Activated CD4-positive, alpha-beta memory T cell treated with anti-CD3 and anti-CD28 coated beads, Interleukin-2, amount 10 ng/mL, durations not matched to agents 7 days and 5 days (primary cell): ENCODE measurements at regions of chr2 and their contacts with region 1.

Region 1: DNA sequence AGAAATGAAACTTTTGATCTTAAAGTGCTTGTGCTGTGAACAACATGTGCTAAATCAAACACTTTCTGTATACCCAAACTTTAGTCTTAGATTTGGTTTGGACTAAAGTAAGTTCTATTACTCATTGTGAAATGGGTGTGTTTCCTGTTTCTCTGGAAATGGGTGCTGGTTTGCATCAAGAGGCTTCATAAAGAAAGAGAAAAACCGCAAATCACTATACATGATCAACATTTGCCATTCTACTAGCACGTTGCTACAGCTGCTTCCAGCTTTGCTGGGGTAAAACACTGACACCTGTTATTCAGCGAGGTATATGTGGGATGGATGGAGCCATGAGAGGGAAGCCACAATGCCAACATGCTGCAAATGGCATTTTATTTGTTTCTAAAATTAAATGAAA is 547.0 kb upstream of the ACVR2A start:
- DNase-seq: peak; percentile 65
- H3K4me3 Mint-ChIP-seq: no peak overlapping the region
- H3K27ac Mint-ChIP-seq: peak overlapping the region; percentile 93
- H3K4me1 Mint-ChIP-seq: peaks cover 76% of the 10 kb centered on the region
- H3K27me3 Mint-ChIP-seq: no peaks in the 10 kb centered on the region

Region 2: DNA sequence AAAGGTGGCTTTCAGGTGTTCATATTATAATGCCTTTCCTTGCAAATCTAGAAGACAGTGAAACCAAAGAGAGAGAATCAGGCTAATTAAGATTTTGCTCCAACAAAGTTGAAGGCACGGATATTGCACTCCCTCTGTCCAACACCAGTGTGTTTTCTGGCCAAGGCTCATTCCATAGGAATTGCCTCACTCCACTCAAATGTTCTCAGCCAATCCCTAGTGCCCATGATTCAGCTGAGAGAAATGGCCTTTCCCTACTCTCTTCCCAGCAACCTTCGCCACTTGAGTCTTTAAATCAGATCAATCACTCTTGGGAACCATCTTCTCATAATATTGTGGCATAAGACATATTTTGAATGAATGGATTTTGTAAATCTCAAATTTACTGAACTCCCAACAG is 221.2 kb before region 1 on chr2:
- CTCF ChIA-PET with region 1: no interaction called
- POLR2A ChIA-PET with region 1: no interaction called
- DNase-seq: no peak
- H3K4me3 Mint-ChIP-seq: no peak overlapping the region
- H3K27ac Mint-ChIP-seq: no peak overlapping the region
- H3K4me1 Mint-ChIP-seq: peaks cover 1% of the 10 kb centered on the region
- H3K27me3 Mint-ChIP-seq: no peaks in the 10 kb centered on the region

Region 3: DNA sequence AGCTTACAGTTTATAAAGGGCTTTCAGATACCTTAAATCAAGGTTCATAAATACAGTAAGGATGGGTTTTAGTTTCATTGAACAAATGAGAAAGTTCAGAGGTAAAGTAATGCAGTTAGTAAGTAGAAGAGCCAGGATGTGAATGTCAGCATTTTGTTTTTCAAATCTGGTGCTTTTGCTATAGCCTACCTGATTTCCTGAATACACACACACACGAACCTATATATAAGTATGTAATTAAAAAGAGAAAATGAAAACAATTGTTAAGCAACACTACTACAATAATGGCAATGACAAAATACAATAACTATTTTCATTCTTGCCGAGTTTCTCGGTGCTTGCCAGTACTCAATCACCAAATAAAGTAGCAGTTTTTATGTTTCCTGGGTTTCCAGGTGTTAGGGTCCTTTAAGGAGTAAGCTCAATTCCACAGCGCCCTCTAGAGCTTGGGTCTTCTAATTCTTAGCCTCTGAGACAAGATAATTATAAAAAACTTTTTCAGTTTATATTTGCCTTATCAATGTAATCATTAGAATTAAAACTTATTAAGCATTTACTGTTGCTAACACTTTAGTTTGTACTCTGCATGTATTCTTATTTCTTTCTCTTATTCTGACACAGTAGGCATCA is 34.1 kb after region 1 on chr2:
- CTCF ChIA-PET with region 1: interaction called, 10 read pairs
- POLR2A ChIA-PET with region 1: interaction called, 16 read pairs
- DNase-seq: peak; percentile 59
- H3K4me3 Mint-ChIP-seq: no peak overlapping the region
- H3K27ac Mint-ChIP-seq: peak overlapping the region; percentile 47
- H3K4me1 Mint-ChIP-seq: peaks cover 38% of the 10 kb centered on the region
- H3K27me3 Mint-ChIP-seq: no peaks in the 10 kb centered on the region

Region 4: GRCh38 chr2:147499785-147500184 is 202.0 kb after region 1 on chr2:
- CTCF ChIA-PET with region 1: interaction called, 3 read pairs
- POLR2A ChIA-PET with region 1: interaction called, 16 read pairs
- DNase-seq: no peak
- H3K4me3 Mint-ChIP-seq: peak overlapping the region; percentile 33
- H3K27ac Mint-ChIP-seq: peak overlapping the region; percentile 98
- H3K4me1 Mint-ChIP-seq: peaks cover 75% of the 10 kb centered on the region
- H3K27me3 Mint-ChIP-seq: no peaks in the 10 kb centered on the region

Region 5: GRCh38 chr2:147843864-147844696 is 546.3 kb after region 1 on chr2:
- CTCF ChIA-PET with region 1: no interaction called
- POLR2A ChIA-PET with region 1: interaction called, 15 read pairs
- DNase-seq: peak; percentile 89
- H3K4me3 Mint-ChIP-seq: peak overlapping the region; percentile 92
- H3K27ac Mint-ChIP-seq: peak overlapping the region; percentile 73
- H3K4me1 Mint-ChIP-seq: peaks cover 40% of the 10 kb centered on the region
- H3K27me3 Mint-ChIP-seq: peaks cover 61% of the 10 kb centered on the region